ENCODE measurements at regions of chr3 and their contacts with region 1.

Region 1: GRCh38 chr3:11271986-11272904 is at the start of gene ATG7:
- DNase-seq: peak; percentile 85 to 93
- ATAC-seq: peak; percentile 94 to 97
- H3K4me3 ChIP-seq: peak within 1 kb of the TSS; percentile 75 to 99 (median 89)
- H3K27ac ChIP-seq: peak within 1 kb of the TSS; percentile 83 to 93 (median 90)
- H3K4me1 ChIP-seq: peaks cover 11 to 20% of the 10 kb centered on the region in 2 donors
- H3K27me3 ChIP-seq: peaks cover 0 to 3% (median 0%) of the 10 kb centered on the region in 3 donors
- CTCF ChIP-seq: peak in 3 of 5 experiments; percentile 12 to 23 (median 22)
- POLR2A ChIP-seq: peak; percentile 77 to 78
- total RNA-seq, gene ATG7: 13.5 to 29.2 (median 15.0) TPM

Region 2: DNA sequence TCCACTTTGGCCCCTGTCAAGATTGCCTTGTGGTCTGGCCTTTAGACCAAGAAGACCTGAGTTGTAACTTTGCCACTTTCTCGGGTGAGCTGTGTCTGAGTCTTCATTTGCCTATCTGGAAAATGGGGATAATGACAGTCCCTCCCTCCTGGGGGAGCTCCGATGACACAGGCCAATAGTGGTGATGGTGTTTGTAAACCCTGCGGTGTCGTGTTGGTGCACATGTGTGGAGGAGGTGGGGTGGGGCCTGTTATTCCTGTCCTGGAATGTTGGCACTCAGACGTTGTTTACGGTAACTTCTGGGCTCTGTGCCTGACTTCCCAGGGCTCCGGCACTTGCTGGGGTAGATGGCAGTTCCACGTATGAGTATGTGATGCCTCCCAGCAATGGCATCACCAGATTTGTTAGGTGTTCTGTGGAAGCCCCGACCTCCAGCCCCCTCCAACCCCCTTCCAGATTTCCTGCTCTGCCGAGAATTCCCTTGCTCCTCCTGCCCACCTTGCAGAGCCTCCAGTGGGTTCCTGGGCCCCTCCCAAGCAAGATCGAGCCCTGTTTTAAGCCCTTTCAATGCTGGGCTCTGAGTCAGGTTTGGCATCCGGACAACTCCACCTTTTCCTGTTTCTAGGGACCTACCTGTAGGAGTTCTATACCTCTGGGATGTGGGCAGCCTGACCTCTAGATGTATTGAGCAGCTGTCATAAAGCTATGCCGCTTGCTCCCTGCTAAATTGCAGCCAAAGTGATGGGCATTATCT is 86.5 kb before region 1 on chr3:
- in situ Hi-C with region 1: no loop called
- intact Hi-C with region 1: loop called (anchors 10 kb)
- DNase-seq: peak; percentile 69 to 78
- ATAC-seq: peak; percentile 97
- H3K4me3 ChIP-seq: no peak overlapping the region
- H3K27ac ChIP-seq: peak overlapping the region; percentile 53 to 62 (median 56)
- H3K4me1 ChIP-seq: peaks cover 21 to 23% of the 10 kb centered on the region in 2 donors
- H3K27me3 ChIP-seq: no peaks in the 10 kb centered on the region
- CTCF ChIP-seq: no peak
- POLR2A ChIP-seq: no peak

Region 3: DNA sequence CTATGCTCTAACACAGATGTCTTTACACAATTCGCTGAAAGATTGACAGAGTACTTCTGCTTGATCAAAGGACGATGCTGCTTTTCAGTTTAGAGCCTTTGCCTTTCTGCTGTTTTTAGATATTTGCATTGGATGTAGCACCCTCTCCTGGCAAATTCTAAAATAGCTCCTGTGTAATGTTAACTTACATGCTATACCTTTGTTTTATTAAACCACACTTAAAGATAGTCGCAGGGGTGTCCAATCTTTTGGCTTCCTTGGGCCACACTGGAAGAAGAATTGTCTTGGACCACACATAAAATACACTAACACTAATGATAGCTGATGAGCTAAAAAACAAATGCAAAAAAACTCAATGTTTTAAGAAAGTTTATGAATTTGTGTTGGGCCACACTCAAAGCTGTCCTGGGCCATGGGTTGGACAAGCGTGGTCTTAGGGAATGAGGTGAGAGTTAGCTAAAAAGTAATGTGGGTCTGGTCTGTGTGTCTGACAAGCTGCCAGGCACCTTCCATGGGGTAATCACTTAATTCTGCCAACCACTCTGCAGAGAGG is 62.9 kb after region 1 on chr3:
- in situ Hi-C with region 1: no loop called
- intact Hi-C with region 1: no loop called
- DNase-seq: no peak
- ATAC-seq: peak; percentile 47 to 77
- H3K4me3 ChIP-seq: no peak overlapping the region
- H3K27ac ChIP-seq: no peak overlapping the region
- H3K4me1 ChIP-seq: no peaks in the 10 kb centered on the region
- H3K27me3 ChIP-seq: no peaks in the 10 kb centered on the region
- CTCF ChIP-seq: peak; percentile 38 to 66 (median 56)
- POLR2A ChIP-seq: no peak

Region 4: DNA sequence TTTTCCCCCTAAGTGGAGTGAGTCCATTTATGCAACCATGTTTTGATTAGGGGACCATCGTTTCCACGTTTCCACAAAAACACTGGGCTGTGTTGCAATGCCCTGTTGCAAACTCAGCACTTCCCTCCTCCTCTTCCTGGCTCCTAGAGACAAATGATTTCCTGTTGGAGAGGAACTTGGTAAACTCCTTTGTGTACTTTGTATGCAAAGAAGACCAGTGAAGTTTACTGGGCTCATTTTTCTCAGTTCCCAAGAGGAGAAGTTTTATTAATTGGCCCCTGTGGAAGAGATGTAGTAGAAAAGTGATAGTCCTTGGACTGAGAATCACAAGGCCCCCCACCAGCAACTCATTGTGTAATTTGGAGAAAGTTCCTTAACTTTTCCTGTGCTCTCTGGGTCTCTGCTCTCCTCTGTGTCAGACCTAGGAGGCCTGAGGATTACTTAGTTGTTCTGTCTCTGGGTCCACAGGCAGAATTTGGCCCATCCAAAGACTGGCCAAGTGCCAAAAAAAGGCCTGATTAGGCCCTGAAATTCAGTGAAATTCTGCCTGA is 95.0 kb after region 1 on chr3:
- in situ Hi-C with region 1: no loop called
- intact Hi-C with region 1: no loop called
- DNase-seq: peak in 1 of 2 donors; percentile 24
- ATAC-seq: peak; percentile 65
- H3K4me3 ChIP-seq: no peak overlapping the region
- H3K27ac ChIP-seq: peak overlapping the region; percentile 66 to 73 (median 68)
- H3K4me1 ChIP-seq: peaks cover 43 to 44% of the 10 kb centered on the region in 2 donors
- H3K27me3 ChIP-seq: no peaks in the 10 kb centered on the region
- CTCF ChIP-seq: no peak
- POLR2A ChIP-seq: no peak

Region 5: DNA sequence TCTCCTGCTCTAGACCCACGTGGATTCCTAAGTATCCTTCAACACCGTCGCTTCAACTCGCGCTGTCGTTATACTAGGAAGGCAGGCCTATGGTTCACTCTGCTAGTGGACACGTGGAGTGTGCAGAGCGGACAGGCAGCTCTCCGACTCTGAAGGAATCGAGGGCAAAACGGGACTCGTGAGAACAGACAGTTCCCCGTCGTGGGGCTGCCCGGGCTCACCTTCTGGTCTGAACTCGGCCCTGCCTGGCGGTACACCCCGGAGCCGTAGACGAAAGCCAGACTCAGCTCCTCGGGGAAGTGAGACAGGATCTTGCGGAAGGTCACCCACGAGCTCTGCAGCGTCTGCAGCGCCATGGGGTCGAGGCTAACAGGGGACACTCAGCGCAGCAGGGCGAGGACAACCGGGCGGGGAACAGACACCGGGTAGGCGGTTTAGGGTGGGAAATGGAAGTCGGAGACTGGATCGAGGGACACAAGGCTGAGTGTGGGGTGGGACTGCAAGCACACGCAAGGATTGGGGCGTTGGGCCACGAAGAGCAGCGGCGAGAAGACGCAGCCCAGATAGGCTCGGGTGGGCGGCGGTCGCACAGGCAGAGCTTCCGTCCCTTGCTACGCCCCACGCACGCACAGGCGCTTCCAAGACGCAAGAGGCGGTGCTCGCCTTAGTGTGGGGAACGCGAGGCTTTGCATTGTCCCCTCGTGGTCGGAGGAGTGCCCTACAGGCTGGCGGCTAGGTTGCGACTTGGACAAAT is 574.2 kb after region 1 on chr3 and contains the start of gene TAMM41:
- in situ Hi-C with region 1: no loop called
- intact Hi-C with region 1: loop called (anchors 1 kb)
- DNase-seq: peak; percentile 87 to 89
- ATAC-seq: peak; percentile 98 to 99
- H3K4me3 ChIP-seq: peak within 1 kb of the TSS; percentile 78 to 96 (median 92)
- H3K27ac ChIP-seq: peak within 1 kb of the TSS; percentile 86 to 93 (median 92)
- H3K4me1 ChIP-seq: peaks cover 21 to 24% of the 10 kb centered on the region in 2 donors
- H3K27me3 ChIP-seq: no peaks in the 10 kb centered on the region
- CTCF ChIP-seq: peak; percentile 62 to 90 (median 76)
- POLR2A ChIP-seq: peak; percentile 44 to 57
- total RNA-seq, gene TAMM41: 2.1 to 9.7 (median 3.8) TPM